ENCODE measurements at regions of chr1 and their contacts with region 1.

Region 1: DNA sequence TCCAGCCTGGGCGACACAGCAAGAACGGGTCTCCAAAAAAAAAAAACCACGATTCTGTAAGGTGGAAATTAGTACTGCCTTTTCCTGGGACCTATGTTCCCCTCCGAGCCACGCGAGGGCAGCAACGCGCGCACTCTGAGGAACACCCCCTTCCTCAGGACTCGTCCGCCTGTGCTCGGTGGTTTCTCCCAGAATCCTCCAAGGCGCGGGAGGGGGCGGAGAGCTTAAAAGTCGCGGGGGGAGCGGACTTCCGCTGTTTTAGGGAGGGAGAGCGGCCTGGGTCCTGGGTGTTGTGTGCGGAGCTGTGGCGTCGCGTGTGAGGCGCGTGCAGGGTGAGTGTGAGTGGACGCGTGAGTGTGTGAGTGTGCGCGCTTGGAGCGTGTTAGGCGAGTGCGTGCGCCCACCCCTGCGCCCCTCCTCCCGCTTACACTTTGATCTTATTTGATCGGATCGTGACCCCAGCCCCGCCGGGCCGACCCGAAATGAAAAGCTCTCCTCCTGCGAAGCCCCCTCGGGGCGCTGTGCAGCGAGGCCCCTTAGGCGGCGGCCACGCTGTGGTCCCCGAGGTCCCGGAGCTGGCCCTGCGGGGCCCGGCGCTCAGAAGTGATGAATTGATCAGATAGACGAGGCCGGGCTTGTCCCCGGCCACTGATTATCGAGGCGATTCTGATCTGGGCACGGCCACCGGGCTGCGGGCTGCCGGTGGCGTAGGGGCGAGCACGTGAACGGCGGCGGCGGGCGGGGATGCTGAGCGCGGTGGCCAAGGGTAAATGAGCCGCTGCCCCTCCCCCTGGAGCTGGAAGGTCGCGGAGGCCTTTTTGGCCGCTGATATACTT is 9.6 kb downstream of the TMEM167B start:
- DNase-seq: peak; percentile 97

Region 2: DNA sequence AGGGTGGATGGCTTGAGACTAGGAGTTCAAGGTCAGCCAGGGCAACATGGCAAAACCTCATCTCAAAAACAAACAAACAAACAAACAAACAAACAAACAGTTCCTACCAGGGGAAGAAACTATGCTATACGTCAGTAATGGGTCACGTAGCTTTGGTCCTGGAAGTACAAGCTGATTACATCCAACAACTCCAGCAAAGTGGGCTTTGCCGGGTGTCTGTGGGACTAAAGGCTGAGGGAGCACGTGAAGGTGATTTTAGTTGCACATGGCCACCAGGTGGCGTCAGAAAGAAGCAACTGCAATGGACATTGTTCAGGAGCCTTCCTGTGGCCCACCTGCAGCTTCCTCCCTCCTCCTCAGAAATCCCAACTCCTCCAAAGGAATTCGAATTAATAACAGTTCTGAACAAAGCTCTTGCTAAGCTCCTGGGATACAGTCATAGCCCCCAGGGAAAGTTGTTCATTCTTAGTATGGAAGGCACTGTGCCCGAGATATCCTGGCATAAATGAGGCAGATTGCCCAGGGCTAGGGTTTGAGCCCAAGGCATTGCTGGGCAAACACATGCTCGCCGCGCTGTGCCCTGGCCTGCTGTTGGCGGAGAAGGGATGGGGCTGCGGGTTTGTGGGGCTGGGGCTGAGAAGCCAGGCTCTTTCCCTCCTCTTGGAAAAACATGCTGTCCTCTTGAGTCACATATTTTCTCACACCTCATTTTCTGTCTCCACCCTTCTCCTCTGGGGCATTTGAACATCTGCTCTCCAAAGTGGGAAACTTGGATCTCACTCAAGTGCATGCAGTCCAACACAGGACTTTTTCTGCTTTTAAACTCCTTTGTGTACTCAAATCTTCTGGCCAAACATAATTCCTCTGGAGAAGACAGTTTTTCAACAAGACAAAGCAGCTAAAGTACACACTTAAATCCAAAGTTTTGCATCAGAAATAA is 271.9 kb before region 1 on chr1:
- CTCF ChIA-PET with region 1: interaction called, 16 read pairs
- POLR2A ChIA-PET with region 1: interaction called, 5 read pairs
- DNase-seq: peak; percentile 90

Region 3: GRCh38 chr1:109041621-109042468 is 58.3 kb before region 1 on chr1 and contains the start of gene WDR47:
- CTCF ChIA-PET with region 1: no interaction called
- POLR2A ChIA-PET with region 1: interaction called, 17 read pairs
- DNase-seq: peak; percentile 100

Region 4: GRCh38 chr1:109083923-109084322 is 16.2 kb before region 1 on chr1:
- CTCF ChIA-PET with region 1: interaction called, 13 read pairs
- POLR2A ChIA-PET with region 1: interaction called, 28 read pairs
- DNase-seq: no peak

Region 5: GRCh38 chr1:109133815-109134214 is 33.7 kb after region 1 on chr1:
- CTCF ChIA-PET with region 1: interaction called, 3 read pairs
- POLR2A ChIA-PET with region 1: interaction called, 13 read pairs
- DNase-seq: no peak

Region 6: GRCh38 chr1:109193653-109194590 is 93.8 kb after region 1 on chr1:
- CTCF ChIA-PET with region 1: no interaction called
- POLR2A ChIA-PET with region 1: interaction called, 11 read pairs
- DNase-seq: peak; percentile 87

Measured in HEK293T (cell line).